K562 (cell line): ENCODE measurements at regions of chr17 and their contacts with region 1.

Region 1: GRCh38 chr17:61412143-61412859 is 12.7 kb downstream of the TBX2 start:
- DNase-seq: peak; percentile 57 to 84 (median 82)
- ATAC-seq: peak; percentile 83
- H3K4me3 ChIP-seq: peak overlapping the region; percentile 4
- H3K27ac ChIP-seq: no peak overlapping the region
- H3K4me1 ChIP-seq: peaks cover 0 to 45% of the 10 kb centered on the region in 2 experiments; a peak in 4 of 5 replicates
- H3K27me3 ChIP-seq: peaks cover 8 to 17% of the 10 kb centered on the region in 2 experiments; a peak in 3 of 5 replicates
- CTCF ChIP-seq: peak; percentile 84 to 88 (median 85)
- EP300 ChIP-seq: no peak
- POLR2A ChIP-seq: no peak
- RAD21 ChIP-seq: peak; percentile 82 to 90

Region 2: DNA sequence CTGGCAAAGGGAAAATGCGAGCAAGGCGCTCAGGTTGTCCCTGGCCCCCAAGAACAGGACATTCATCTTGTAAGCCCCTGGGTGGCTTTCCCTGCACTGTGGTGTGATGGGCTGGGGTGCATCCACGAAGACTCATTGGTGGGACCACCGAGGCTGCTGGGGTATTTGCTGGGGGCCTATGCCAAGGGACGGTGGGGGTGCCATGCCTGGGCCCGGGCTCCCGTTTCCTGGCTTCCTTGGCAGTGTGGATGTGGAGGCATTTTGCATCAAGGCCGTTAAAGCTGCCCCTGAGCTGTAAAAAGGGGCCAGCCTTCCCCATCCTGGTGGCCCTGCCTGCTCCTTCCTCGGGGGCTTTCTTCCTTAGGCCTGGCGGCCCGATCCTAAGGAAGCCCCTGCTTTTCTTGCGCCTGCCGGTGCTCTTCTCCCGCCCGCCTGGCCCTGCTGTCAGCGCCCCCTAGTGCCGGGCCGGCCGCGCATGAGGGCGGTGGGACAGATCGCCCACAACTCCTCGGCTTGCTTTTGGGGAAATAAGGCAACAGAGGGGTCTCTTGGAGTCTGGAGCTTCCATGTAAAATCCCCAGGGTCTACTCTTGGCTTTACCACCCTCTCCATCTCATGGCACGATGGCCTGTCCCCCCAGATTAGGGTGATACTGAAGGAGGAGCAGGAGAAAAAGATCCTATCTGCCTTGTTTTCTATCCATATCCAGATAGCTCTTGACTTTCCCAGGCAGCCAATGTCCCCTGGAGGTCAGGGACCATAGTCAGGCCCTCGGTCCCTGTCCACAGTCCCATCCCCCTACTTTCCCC is 22.4 kb before region 1 on chr17:
- CTCF ChIA-PET with region 1: no interaction called
- POLR2A ChIA-PET with region 1: no interaction called
- in situ Hi-C with region 1: no loop called
- intact Hi-C with region 1: no loop called
- DNase-seq: peak; percentile 40 to 75 (median 69)
- ATAC-seq: peak; percentile 87
- H3K4me3 ChIP-seq: no peak overlapping the region
- H3K27ac ChIP-seq: no peak overlapping the region
- H3K4me1 ChIP-seq: peaks cover 0 to 10% of the 10 kb centered on the region in 2 experiments; a peak in 2 of 5 replicates
- H3K27me3 ChIP-seq: peaks cover 0 to 48% of the 10 kb centered on the region in 2 experiments; a peak in 3 of 5 replicates
- CTCF ChIP-seq: peak; percentile 69 to 81 (median 77)
- EP300 ChIP-seq: no peak
- POLR2A ChIP-seq: no peak
- RAD21 ChIP-seq: peak; percentile 39 to 77; a peak in 3 of 4 replicates

Region 3: DNA sequence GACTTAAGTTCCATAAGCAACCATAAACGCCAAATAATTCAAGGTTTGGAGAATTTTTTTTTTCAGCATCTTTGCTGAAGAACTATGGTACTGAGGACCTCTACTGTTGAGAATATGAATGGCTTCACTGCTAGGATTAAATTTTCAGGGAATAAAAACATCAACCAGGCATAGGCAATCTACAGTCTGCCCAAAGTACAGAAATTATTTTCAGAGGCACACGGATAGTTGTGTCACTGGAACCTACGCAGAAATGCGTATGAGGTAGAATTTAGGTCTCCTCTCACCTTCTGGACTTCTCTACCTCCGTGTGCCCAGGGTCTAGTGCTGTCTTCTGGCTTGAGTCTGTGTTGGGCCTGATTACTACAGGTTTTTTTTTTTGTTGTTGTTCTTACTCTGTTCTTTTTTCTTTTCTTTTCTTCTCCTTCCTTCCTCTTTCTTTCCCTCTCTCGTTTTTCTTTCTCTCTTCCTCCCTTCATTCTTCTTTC is 139.0 kb after region 1 on chr17:
- CTCF ChIA-PET with region 1: interaction called, 3 read pairs
- POLR2A ChIA-PET with region 1: no interaction called
- in situ Hi-C with region 1: no loop called
- intact Hi-C with region 1: loop called (anchors 2 kb)
- DNase-seq: peak; percentile 10 to 38 (median 16)
- ATAC-seq: peak; percentile 60; the same call in 1 of the 3 replicates
- H3K4me3 ChIP-seq: no peak overlapping the region
- H3K27ac ChIP-seq: no peak overlapping the region
- H3K4me1 ChIP-seq: no peaks in the 10 kb centered on the region
- H3K27me3 ChIP-seq: peaks cover 8 to 11% of the 10 kb centered on the region in 2 experiments; a peak in 3 of 5 replicates
- CTCF ChIP-seq: peak; percentile 44 to 78 (median 49); a peak in 5 of 6 replicates
- EP300 ChIP-seq: no peak
- POLR2A ChIP-seq: no peak
- RAD21 ChIP-seq: peak; percentile 70 to 81

Region 4: DNA sequence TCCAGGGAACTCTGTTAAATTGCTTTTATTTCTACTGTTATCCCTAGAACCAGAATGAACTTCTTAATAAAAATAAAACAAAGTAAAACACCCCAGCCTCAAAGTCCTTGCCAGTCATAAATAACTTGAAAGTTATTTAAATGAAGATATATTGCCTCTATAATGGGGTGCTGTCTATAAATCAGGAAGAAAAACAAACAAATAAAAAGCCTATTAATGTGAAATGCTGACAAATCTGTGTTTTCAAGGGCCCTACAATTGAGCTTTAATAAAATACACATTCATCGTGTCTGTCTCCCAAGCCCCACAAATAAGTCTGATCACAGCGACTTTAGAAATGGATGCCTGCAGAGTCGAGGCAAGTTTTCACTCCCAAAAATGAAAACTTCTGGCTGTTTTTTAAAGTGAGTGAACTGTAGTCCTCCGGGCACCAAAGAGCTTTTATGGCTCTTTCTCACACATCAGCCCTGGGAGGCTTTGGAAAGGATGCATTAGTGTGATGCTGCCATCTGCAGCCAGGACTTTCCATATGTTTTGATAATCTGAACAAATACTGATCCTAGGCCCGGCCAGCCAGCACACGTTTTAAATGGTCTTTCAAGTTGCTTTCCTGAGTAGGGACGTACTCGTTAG is 162.4 kb after region 1 on chr17:
- CTCF ChIA-PET with region 1: no interaction called
- POLR2A ChIA-PET with region 1: interaction called, 4 read pairs
- in situ Hi-C with region 1: no loop called
- intact Hi-C with region 1: loop called (anchors 2 kb)
- DNase-seq: peak in 2 of 4 experiments; percentile 11 to 18
- ATAC-seq: peak; percentile 45; the same call in 1 of the 3 replicates
- H3K4me3 ChIP-seq: no peak overlapping the region
- H3K27ac ChIP-seq: no peak overlapping the region
- H3K4me1 ChIP-seq: no peaks in the 10 kb centered on the region
- H3K27me3 ChIP-seq: no peaks in the 10 kb centered on the region; a peak in 1 of 5 replicates
- CTCF ChIP-seq: peak in 2 of 3 experiments; percentile 18 to 40; a peak in 2 of 6 replicates
- EP300 ChIP-seq: no peak
- POLR2A ChIP-seq: no peak
- RAD21 ChIP-seq: peak; percentile 26 to 59

Region 5: DNA sequence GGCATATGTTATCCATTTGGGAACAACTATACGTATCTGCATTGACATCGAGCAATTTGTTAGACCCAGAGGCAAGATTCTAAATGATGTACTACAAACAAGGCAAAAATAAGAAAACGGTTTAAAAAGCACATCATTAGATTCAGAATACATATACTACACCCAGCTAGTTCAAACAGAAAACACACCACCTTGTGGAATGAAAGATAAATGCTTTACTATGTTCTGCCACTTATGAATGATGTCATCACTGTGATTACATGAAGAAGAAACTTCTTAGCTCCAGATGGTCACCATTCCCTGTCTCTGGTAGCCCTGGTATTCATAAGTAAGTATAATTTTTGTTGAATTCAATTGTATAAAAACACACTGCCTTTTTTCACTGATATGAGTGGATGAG is 170.9 kb after region 1 on chr17:
- CTCF ChIA-PET with region 1: interaction called, 3 read pairs
- POLR2A ChIA-PET with region 1: interaction called, 3 read pairs
- in situ Hi-C with region 1: no loop called
- intact Hi-C with region 1: loop called (anchors 2 kb)
- DNase-seq: peak; percentile 23 to 42 (median 30)
- ATAC-seq: peak; percentile 84
- H3K4me3 ChIP-seq: no peak overlapping the region
- H3K27ac ChIP-seq: no peak overlapping the region
- H3K4me1 ChIP-seq: no peaks in the 10 kb centered on the region
- H3K27me3 ChIP-seq: 0 out of 5 replicates have a peak, but pooled peaks cover 0 to 3% of the 10 kb centered on the region in 2 experiments
- CTCF ChIP-seq: peak; percentile 29 to 44 (median 37); a peak in 3 of 6 replicates
- EP300 ChIP-seq: no peak
- POLR2A ChIP-seq: no peak
- RAD21 ChIP-seq: peak in 1 of 2 experiments; percentile 56; a peak in 2 of 4 replicates

Region 6: GRCh38 chr17:61837175-61838051 is 425.1 kb after region 1 on chr17:
- CTCF ChIA-PET with region 1: interaction called, 11 read pairs
- POLR2A ChIA-PET with region 1: no interaction called
- in situ Hi-C with region 1: no loop called
- intact Hi-C with region 1: loop called (anchors 10 kb)
- DNase-seq: peak; percentile 40 to 77 (median 45)
- ATAC-seq: peak; percentile 91
- H3K4me3 ChIP-seq: no peak overlapping the region
- H3K27ac ChIP-seq: no peak overlapping the region
- H3K4me1 ChIP-seq: no peaks in the 10 kb centered on the region
- H3K27me3 ChIP-seq: no peaks in the 10 kb centered on the region
- CTCF ChIP-seq: peak; percentile 63 to 85 (median 73)
- EP300 ChIP-seq: no peak
- POLR2A ChIP-seq: no peak
- RAD21 ChIP-seq: peak; percentile 75 to 86